ENCODE measurements at regions of chr2 and their contacts with region 1.

Region 1: GRCh38 chr2:207155516-207156444 is 10.0 kb downstream of the KLF7 start:
- H3K4me3 ChIP-seq: no peak overlapping the region
- H3K27ac ChIP-seq: no peak overlapping the region
- H3K4me1 ChIP-seq: peaks cover 3% of the 10 kb centered on the region; the same call in 1 of the 2 replicates
- CTCF ChIP-seq: no peak

Region 2: GRCh38 chr2:207166039-207166348 is 10.2 kb after region 1 on chr2:
- CTCF ChIA-PET with region 1: no interaction called
- POLR2A ChIA-PET with region 1: interaction called, 10 read pairs
- H3K4me3 ChIP-seq: peak overlapping the region; percentile 66
- H3K27ac ChIP-seq: peak overlapping the region; percentile 99
- H3K4me1 ChIP-seq: peaks cover 6% of the 10 kb centered on the region
- CTCF ChIP-seq: no peak